ENCODE measurements at regions of chr2 and their contacts with region 1.

Region 1: DNA sequence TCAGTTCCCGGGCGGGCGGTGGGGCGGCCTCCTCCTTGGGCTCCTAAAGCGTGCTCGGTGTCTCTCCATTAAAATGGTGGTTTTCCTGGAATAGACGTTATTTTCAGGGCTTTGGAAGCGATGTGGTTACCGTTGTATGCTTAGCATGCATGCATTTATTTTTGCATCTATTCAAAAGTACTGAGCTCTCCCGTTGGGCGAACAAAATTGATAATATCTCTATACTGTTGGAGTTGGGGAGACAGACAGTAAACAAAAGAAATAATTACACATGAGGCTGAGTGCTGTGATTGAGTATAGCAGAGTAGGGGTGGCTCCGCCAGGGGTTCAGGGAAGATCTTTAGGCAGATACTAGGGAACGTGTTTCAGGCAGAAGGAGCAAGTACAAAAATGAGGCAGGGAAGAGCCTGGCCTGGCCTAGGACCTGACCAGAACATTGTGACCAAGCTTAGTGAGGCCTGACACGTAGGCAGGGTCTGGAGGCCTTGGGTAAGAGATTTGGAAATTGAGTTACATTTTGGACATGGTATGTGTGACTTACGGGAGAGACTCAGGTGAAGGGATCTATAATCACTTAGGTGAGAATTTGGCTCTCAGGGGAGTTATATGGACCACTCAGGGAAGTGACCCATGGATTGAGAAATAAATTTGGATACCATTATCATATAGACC is 674 bp downstream of the NCAPH start:
- DNase-seq: no peak
- ATAC-seq: no peak
- H3K4me3 Mint-ChIP-seq: peak overlapping the region; percentile 92
- H3K27ac Mint-ChIP-seq: peak overlapping the region; percentile 78
- H3K4me1 Mint-ChIP-seq: peaks cover 49% of the 10 kb centered on the region
- H3K27me3 Mint-ChIP-seq: no peaks in the 10 kb centered on the region

Region 2: DNA sequence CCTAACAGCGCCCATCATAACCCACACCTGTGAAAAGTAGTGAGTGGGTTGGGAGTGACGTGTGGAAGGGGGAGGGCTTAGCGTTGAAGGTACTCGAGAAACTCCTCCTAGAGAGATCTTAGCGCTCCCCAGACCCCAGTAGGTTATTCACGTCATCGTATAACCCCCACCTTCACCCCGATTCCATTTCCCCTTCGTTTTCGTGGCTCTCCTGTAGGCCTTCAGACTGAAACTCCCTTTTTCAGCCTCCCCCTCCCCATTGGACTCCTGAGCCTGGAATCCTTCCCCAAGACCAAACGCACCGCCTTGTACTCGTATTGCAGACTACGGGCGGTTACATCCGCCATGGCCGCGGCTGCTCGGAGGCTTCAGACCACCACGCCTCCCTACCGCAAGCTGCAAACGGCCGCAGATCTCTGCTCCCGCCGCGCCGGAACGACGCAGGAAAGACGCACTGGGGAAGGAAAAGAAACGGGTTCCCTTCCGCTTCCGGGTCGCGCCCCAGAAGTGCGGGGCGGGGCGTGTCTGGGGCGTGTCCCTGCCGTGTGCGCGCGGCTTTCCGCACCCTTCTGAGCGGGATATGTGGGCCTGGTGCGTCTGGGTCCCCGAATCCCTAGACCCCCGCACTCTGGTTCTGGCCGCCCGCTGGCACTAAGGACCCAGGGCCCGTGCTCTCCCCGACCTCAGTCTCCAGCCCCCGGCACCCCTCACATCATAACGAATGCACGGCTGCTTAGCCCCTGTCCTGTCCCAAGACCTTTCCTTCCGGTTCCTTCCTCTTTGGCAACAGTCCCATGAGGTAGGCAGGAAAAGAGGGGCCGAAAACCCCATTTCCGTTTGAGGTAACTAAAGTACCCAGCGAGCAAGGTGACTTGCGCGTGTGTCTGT is 30.9 kb before region 1 on chr2 and contains the start of gene SNRNP200:
- POLR2A ChIA-PET with region 1: interaction called, 49 read pairs
- DNase-seq: peak; percentile 93
- ATAC-seq: peak; percentile 91
- H3K4me3 Mint-ChIP-seq: peak within 1 kb of the TSS; percentile 100
- H3K27ac Mint-ChIP-seq: peak within 1 kb of the TSS; percentile 99
- H3K4me1 Mint-ChIP-seq: peaks cover 48% of the 10 kb centered on the region
- H3K27me3 Mint-ChIP-seq: no peaks in the 10 kb centered on the region
- total RNA-seq, gene SNRNP200: 194 to 201 TPM

Region 3: DNA sequence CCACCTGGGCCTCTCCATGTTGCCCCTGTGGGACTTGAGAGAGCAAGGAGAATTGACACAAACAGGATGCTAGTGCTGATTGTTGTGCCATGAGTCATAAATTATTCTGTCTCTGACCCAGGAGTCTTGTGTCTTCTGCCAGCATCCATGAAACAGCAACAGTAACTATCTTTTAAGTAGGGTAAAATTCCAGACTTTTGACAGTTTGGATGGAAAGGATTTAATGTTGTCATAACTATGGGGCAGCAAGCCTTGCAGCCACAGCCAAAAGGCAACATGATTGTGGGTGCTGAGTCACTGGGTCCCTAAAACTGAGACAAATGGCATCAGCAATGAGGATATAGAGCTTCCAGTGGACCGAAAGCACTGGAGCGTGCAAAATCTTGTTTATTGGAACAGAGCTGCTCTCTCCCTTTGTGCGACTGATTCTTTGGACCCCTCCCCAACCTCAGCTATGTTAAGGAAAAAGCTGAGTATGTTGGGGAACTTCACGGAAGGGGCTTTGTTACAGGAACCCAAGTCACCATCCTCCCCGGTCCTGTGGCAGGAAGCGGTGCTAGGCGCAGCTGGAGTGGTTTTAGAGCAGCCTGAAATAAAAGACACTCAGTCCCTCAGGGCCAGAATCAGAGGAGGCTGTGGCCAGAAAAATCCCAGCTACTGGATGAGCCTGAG is 20.7 kb before region 1 on chr2:
- POLR2A ChIA-PET with region 1: interaction called, 169 read pairs
- DNase-seq: peak; percentile 56
- ATAC-seq: peak; percentile 72
- H3K4me3 Mint-ChIP-seq: peak overlapping the region; percentile 77
- H3K27ac Mint-ChIP-seq: peak overlapping the region; percentile 86
- H3K4me1 Mint-ChIP-seq: peaks cover 55% of the 10 kb centered on the region
- H3K27me3 Mint-ChIP-seq: no peaks in the 10 kb centered on the region